Activated CD8-positive, alpha-beta T cell treated with anti-CD3 and anti-CD28 coated beads, Interleukin-2, amount 10 ng/mL, durations not matched to agents 7 days and 5 days (primary cell): ENCODE measurements at regions of chr11 and their contacts with region 1.

Region 1: GRCh38 chr11:102341844-102342318 is 5.1 kb upstream of the BIRC2 start:
- DNase-seq: peak; percentile 86
- ATAC-seq: peak; percentile 69
- H3K4me3 Mint-ChIP-seq: no peak overlapping the region
- H3K27ac Mint-ChIP-seq: no peak overlapping the region
- H3K4me1 Mint-ChIP-seq: peaks cover 21% of the 10 kb centered on the region
- H3K27me3 Mint-ChIP-seq: no peaks in the 10 kb centered on the region

Region 2: DNA sequence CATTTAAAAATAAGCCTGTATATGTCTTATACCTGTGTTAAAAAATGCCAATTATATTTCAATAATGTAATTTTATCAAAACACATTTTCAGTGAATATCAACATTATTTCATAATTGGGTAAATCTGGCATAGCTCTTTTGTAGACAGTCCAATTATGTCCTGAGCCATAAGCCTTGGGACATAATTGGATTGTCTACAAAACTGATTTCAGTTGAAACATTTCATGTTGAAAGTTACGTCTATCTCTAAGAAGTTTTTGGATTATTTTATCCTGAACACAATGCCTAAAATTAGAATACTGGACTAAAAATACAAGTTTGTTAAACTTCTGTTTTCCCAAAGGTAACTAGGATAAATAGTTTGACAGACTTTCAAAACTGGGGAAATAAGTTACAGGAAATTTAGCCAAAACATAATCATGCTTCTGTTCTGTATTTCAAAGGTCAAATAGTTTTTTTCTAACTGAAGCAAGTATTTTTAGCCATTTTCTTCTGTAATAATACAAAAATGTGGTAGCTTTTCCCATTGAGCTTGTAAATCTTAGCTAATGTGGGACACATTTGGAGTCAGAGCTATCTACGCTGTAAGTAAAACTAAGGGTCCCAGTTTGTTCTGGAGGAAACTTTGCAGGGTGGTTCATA is 125.3 kb before region 1 on chr11:
- CTCF ChIA-PET with region 1: no interaction called
- POLR2A ChIA-PET with region 1: no interaction called
- DNase-seq: no peak
- ATAC-seq: no peak
- H3K4me3 Mint-ChIP-seq: no peak overlapping the region
- H3K27ac Mint-ChIP-seq: no peak overlapping the region
- H3K4me1 Mint-ChIP-seq: no peaks in the 10 kb centered on the region
- H3K27me3 Mint-ChIP-seq: peaks cover 2% of the 10 kb centered on the region

Region 3: GRCh38 chr11:102287964-102288724 is 53.7 kb before region 1 on chr11:
- CTCF ChIA-PET with region 1: interaction called, 157 read pairs
- POLR2A ChIA-PET with region 1: no interaction called
- DNase-seq: peak; percentile 58
- ATAC-seq: peak; percentile 92
- H3K4me3 Mint-ChIP-seq: peak overlapping the region; percentile 31
- H3K27ac Mint-ChIP-seq: no peak overlapping the region
- H3K4me1 Mint-ChIP-seq: peaks cover 22% of the 10 kb centered on the region
- H3K27me3 Mint-ChIP-seq: no peaks in the 10 kb centered on the region

Region 4: GRCh38 chr11:102317099-102317767 is 24.6 kb before region 1 on chr11 and contains the start of gene BIRC3:
- CTCF ChIA-PET with region 1: interaction called, 32 read pairs
- POLR2A ChIA-PET with region 1: interaction called, 3 read pairs
- DNase-seq: peak; percentile 92
- ATAC-seq: peak; percentile 90
- H3K4me3 Mint-ChIP-seq: peak within 1 kb of the TSS; percentile 89
- H3K27ac Mint-ChIP-seq: peak within 1 kb of the TSS; percentile 94
- H3K4me1 Mint-ChIP-seq: peaks cover 66% of the 10 kb centered on the region
- H3K27me3 Mint-ChIP-seq: no peaks in the 10 kb centered on the region
- total RNA-seq, gene BIRC3: 12.9 to 14.5 TPM

Region 5: DNA sequence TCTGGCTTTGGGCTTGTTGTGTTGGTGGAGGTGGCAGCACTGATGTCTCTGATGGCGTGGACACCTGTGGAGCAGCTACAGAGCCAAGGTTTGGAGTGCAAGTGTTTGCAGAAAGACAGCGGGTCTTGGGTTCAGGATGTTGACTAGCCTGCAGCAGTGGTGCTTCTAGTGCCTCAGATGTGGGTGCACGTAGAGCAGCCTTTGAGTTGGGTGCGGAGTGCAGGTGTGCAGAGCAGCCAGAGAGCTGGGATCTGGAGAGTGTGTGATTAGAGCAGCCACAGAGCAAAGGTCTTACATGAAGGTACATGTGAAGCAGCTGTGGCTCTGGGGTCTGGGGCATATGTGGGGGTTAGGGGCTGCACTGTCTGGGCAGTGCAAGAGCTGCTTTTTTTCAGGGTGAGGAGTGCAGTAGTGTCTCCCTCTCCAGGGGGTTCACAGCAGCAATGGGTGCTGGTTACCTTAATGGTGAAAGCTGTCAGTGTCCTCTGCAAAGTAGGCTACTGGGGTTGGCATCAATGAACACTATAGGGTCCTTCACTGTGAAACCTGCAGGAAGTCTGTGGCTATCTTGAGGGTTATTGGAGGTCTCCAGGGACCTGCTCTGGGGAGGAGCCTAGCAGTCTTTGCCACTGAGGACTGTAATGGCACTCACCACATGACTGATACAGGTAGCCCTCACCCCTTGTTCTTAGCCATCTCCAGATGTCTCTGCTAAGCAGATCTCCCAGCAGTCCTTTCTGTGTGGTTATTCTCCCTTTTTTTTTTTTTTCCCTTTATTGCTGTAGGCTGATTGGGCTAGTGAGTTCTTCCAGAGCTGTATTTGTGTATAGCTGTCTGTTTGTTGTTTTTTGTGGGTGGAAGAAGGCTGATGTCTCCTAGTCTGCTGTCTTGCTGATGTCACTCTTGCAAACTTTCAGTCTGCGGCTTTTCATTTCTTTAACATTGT is 19.5 kb after region 1 on chr11:
- CTCF ChIA-PET with region 1: interaction called, 36 read pairs
- POLR2A ChIA-PET with region 1: interaction called, 4 read pairs
- DNase-seq: peak; percentile 63
- ATAC-seq: peak; percentile 84
- H3K4me3 Mint-ChIP-seq: peak overlapping the region; percentile 47
- H3K27ac Mint-ChIP-seq: peak overlapping the region; percentile 84
- H3K4me1 Mint-ChIP-seq: peaks cover 37% of the 10 kb centered on the region
- H3K27me3 Mint-ChIP-seq: no peaks in the 10 kb centered on the region

Region 6: GRCh38 chr11:102390667-102391465 is 49.0 kb after region 1 on chr11:
- CTCF ChIA-PET with region 1: interaction called, 17 read pairs
- POLR2A ChIA-PET with region 1: interaction called, 3 read pairs
- DNase-seq: peak; percentile 64
- ATAC-seq: peak; percentile 70
- H3K4me3 Mint-ChIP-seq: no peak overlapping the region
- H3K27ac Mint-ChIP-seq: no peak overlapping the region
- H3K4me1 Mint-ChIP-seq: peaks cover 26% of the 10 kb centered on the region
- H3K27me3 Mint-ChIP-seq: no peaks in the 10 kb centered on the region

Region 7: GRCh38 chr11:102495161-102496042 is 153.5 kb after region 1 on chr11:
- CTCF ChIA-PET with region 1: interaction called, 48 read pairs
- POLR2A ChIA-PET with region 1: interaction called, 6 read pairs
- DNase-seq: peak; percentile 68
- ATAC-seq: peak; percentile 78
- H3K4me3 Mint-ChIP-seq: no peak overlapping the region
- H3K27ac Mint-ChIP-seq: peak overlapping the region; percentile 9
- H3K4me1 Mint-ChIP-seq: peaks cover 27% of the 10 kb centered on the region
- H3K27me3 Mint-ChIP-seq: peaks cover 14% of the 10 kb centered on the region

Region 8: DNA sequence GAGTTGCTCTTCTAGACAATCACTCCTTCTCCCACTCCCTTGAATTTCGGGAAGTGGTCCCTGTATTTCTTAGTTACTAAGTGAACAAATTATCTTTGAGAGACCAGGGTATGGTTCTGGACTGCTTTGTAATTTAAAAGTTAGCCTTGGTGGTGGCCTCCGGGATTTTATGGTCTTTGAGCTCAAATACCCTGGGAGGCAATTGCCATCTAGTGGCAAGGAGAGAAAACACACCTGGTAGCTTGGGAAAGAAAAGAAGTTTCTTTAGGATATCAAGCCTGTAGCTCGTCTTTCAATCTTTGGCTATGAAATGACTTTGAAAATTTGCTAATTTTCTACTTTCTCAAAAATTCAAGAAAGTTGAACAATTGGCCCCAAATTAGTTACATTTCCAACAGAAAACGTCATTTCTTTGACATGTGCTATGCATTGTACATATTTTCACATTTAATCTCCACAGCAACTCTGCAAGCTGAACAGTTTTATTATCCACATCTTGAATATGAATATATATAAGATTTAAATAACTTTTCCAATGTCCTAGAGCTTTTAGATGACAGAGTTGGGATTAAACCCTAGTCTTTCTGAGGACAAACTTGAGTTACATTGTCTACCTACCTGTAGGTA is 324.6 kb after region 1 on chr11:
- CTCF ChIA-PET with region 1: interaction called, 70 read pairs
- POLR2A ChIA-PET with region 1: no interaction called
- DNase-seq: peak; percentile 38
- ATAC-seq: peak; percentile 36
- H3K4me3 Mint-ChIP-seq: no peak overlapping the region
- H3K27ac Mint-ChIP-seq: no peak overlapping the region
- H3K4me1 Mint-ChIP-seq: no peaks in the 10 kb centered on the region
- H3K27me3 Mint-ChIP-seq: peaks cover 19% of the 10 kb centered on the region